H1 (cell line): ENCODE measurements at regions of chr15 and their contacts with region 1.

Region 1: GRCh38 chr15:70569091-70569621 is 194.2 kb downstream of the UACA start:
- DNase-seq: no peak
- H3K4me3 ChIP-seq: no peak overlapping the region
- H3K27ac ChIP-seq: no peak overlapping the region
- H3K4me1 ChIP-seq: peaks cover 0 to 3% (median 1%) of the 10 kb centered on the region in 4 experiments; a peak in 1 of 7 replicates
- H3K27me3 ChIP-seq: 0 out of 7 replicates have a peak, but pooled peaks cover 0 to 2% (median 0%) of the 10 kb centered on the region in 4 experiments
- CTCF ChIP-seq: peak; percentile 47 to 72 (median 70)
- EP300 ChIP-seq: no peak
- POLR2A ChIP-seq: no peak
- RAD21 ChIP-seq: peak; percentile 81 to 88

Region 2: GRCh38 chr15:70512772-70513362 is 56.3 kb before region 1 on chr15:
- CTCF ChIA-PET with region 1: interaction called, 13 read pairs
- POLR2A ChIA-PET with region 1: no interaction called
- DNase-seq: peak; percentile 53 to 80
- H3K4me3 ChIP-seq: no peak overlapping the region
- H3K27ac ChIP-seq: no peak overlapping the region
- H3K4me1 ChIP-seq: peaks cover 0 to 6% (median 3%) of the 10 kb centered on the region in 4 experiments; a peak in 4 of 7 replicates
- H3K27me3 ChIP-seq: no peaks in the 10 kb centered on the region
- CTCF ChIP-seq: peak; percentile 99 to 100 (median 100)
- EP300 ChIP-seq: no peak
- POLR2A ChIP-seq: no peak
- RAD21 ChIP-seq: peak; percentile 91 to 96

Region 3: DNA sequence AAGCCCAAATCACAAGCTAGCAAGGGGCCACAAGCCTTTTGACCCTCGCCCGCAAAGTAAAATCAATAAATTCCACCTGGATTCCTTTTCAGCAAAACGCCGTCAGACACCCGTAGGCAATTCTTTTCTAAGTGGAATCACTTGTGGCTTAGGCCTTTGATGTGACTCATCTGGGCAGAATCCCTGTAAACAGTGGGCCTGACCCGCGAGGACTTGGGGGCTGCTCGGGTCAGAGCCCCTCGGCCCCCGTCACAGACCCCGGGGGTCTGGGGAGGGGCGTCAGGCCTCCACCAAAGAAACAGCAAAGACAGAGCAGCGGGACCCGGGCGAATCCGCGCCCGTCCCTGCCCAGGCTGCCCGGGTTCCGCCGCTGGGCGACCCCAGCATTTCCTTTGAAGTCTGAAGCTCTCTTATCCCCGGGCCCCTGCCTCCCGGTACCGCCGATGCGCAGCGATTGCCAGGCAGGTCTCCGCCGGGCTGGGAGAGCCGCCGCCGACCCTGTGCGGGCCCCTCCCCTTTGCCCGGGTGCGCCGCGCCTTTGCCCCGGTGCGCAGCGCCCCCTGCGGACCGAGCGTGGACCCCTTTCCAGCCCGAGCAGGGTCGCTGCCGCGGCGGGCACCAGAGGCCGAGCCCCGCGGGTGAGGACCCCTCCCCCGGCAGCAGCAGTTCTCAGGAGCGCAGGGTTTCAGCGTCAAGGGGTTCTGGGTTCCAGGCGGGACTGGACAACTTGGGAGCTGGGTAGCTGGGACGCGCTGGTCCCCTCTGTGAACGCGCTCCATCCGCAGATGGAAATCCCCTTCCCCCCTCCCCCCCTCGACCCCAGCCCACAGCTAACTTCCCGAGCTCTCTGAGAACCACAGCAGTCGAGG is 15.9 kb after region 1 on chr15:
- CTCF ChIA-PET with region 1: interaction called, 27 read pairs
- POLR2A ChIA-PET with region 1: interaction called, 3 read pairs
- DNase-seq: peak; percentile 41 to 91
- H3K4me3 ChIP-seq: peak overlapping the region; percentile 17 to 63 (median 36)
- H3K27ac ChIP-seq: no peak overlapping the region
- H3K4me1 ChIP-seq: peaks cover 0 to 4% (median 3%) of the 10 kb centered on the region in 4 experiments; a peak in 3 of 7 replicates
- H3K27me3 ChIP-seq: peaks cover 0 to 10% (median 8%) of the 10 kb centered on the region in 4 experiments; a peak in 5 of 7 replicates
- CTCF ChIP-seq: peak; percentile 72 to 85 (median 72)
- EP300 ChIP-seq: no peak
- POLR2A ChIP-seq: no peak
- RAD21 ChIP-seq: peak; percentile 67 to 83

Region 4: GRCh38 chr15:70605606-70606410 is 36.7 kb after region 1 on chr15:
- CTCF ChIA-PET with region 1: interaction called, 12 read pairs
- POLR2A ChIA-PET with region 1: no interaction called
- DNase-seq: no peak
- H3K4me3 ChIP-seq: no peak overlapping the region
- H3K27ac ChIP-seq: no peak overlapping the region
- H3K4me1 ChIP-seq: peaks cover 1 to 8% (median 4%) of the 10 kb centered on the region in 4 experiments; a peak in 5 of 7 replicates
- H3K27me3 ChIP-seq: no peaks in the 10 kb centered on the region; a peak in 1 of 7 replicates
- CTCF ChIP-seq: no peak
- EP300 ChIP-seq: no peak
- POLR2A ChIP-seq: no peak
- RAD21 ChIP-seq: no peak

Region 5: GRCh38 chr15:70627734-70628548 is 58.8 kb after region 1 on chr15:
- CTCF ChIA-PET with region 1: interaction called, 28 read pairs
- POLR2A ChIA-PET with region 1: no interaction called
- DNase-seq: no peak
- H3K4me3 ChIP-seq: no peak overlapping the region
- H3K27ac ChIP-seq: no peak overlapping the region
- H3K4me1 ChIP-seq: peaks cover 13 to 26% (median 19%) of the 10 kb centered on the region in 4 experiments
- H3K27me3 ChIP-seq: no peaks in the 10 kb centered on the region; a peak in 2 of 7 replicates
- CTCF ChIP-seq: no peak
- EP300 ChIP-seq: no peak
- POLR2A ChIP-seq: no peak
- RAD21 ChIP-seq: no peak

Region 6: GRCh38 chr15:70636540-70637165 is 67.5 kb after region 1 on chr15:
- CTCF ChIA-PET with region 1: interaction called, 28 read pairs
- POLR2A ChIA-PET with region 1: no interaction called
- DNase-seq: no peak
- H3K4me3 ChIP-seq: no peak overlapping the region
- H3K27ac ChIP-seq: no peak overlapping the region
- H3K4me1 ChIP-seq: peaks cover 14 to 27% (median 17%) of the 10 kb centered on the region in 4 experiments
- H3K27me3 ChIP-seq: peaks cover 0 to 2% (median 0%) of the 10 kb centered on the region in 4 experiments; a peak in 1 of 7 replicates
- CTCF ChIP-seq: peak; percentile 35 to 71 (median 66)
- EP300 ChIP-seq: no peak
- POLR2A ChIP-seq: no peak
- RAD21 ChIP-seq: peak; percentile 78 to 84

Region 7: DNA sequence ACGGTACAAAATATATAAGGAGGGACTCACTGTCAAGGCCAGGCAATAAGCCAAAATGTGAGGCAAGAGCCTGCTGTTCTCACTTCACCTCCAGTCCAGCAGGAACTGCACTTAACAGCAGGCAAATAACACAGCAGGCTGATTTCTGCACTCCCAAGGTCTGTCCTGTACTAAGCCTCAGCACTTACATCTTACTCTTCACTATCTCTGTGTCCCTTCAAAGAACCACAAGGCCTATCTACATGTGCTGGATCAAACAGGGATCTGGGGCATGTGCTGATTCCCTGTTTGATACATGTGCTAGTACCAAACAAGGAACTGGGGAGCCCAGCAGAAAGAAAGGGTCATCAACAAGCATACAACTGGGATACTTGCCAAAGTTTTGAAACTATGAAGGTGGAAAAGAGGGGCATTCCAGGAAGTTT is 172.0 kb after region 1 on chr15:
- CTCF ChIA-PET with region 1: no interaction called
- POLR2A ChIA-PET with region 1: no interaction called
- DNase-seq: no peak
- H3K4me3 ChIP-seq: no peak overlapping the region
- H3K27ac ChIP-seq: no peak overlapping the region; the same call in 1 of the 2 replicates
- H3K4me1 ChIP-seq: peaks cover 0 to 2% (median 0%) of the 10 kb centered on the region in 4 experiments; a peak in 1 of 7 replicates
- H3K27me3 ChIP-seq: no peaks in the 10 kb centered on the region
- CTCF ChIP-seq: no peak
- EP300 ChIP-seq: no peak
- POLR2A ChIP-seq: no peak
- RAD21 ChIP-seq: no peak